Activated CD4-positive, alpha-beta T cell treated with anti-CD3 and anti-CD28 coated beads, Interleukin-2, amount 10 ng/mL, durations not matched to agents 24 days and 14 days (primary cell): ENCODE measurements at regions of chr6 and their contacts with region 1.

Region 1: GRCh38 chr6:26537846-26538571 is at the start of gene HMGN4:
- DNase-seq: peak; percentile 95
- H3K4me3 Mint-ChIP-seq: peak within 1 kb of the TSS; percentile 93
- H3K27ac Mint-ChIP-seq: peak within 1 kb of the TSS; percentile 95
- H3K4me1 Mint-ChIP-seq: peaks cover 51% of the 10 kb centered on the region
- H3K27me3 Mint-ChIP-seq: peaks cover 2% of the 10 kb centered on the region
- total RNA-seq, gene HMGN4: 81.6 and 83.4 TPM in 2 replicates

Region 2: DNA sequence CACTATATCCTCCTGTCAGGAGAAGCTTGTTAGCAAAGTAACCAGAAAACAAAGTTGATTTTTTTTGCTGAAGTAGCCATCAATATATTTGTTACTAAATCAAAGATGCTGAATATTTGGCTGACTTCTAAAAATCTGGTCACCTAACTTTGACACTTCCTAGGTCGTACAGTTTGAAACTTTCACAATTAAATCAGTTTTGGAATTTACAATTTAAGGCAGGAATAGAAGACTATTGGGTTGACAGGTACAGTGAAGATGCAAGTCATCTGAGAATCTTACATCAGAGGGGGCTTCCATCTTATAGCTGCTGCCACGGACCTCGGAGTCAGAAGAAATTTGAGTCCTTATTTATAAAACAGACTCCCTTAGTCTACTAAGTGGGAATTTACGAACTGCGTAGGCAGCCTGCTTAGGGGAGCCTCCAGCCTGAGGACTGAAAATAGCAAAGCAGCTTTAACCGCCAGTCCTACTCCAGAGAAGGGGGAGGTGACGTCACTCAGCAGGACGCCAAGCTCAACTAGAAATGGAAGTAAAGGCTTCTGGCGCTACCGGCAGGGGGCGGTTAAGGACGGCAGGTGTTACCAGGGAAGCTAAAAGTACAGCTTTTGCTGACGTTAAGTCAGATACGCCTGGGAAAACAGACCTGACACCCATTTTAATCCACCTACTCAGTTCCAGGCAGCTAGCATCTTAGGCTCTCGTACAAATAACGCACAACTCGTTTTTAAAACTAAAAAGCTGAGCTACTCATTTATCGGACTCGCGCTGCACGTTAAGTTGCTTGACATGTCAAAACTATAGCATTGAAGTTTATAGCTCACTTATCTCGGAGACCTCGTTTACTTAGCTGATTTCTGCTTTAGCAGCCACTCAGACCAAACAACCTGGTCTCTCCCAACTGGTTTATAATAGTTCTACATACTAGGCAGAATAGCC is 511.8 kb before region 1 on chr6:
- intact Hi-C with region 1: loop called (anchors 1 kb)
- DNase-seq: peak; percentile 97
- H3K4me3 Mint-ChIP-seq: peak overlapping the region; percentile 93
- H3K27ac Mint-ChIP-seq: peak overlapping the region; percentile 98
- H3K4me1 Mint-ChIP-seq: peaks cover 64% of the 10 kb centered on the region
- H3K27me3 Mint-ChIP-seq: peaks cover 3% of the 10 kb centered on the region

Region 3: GRCh38 chr6:26312501-26313390 is 225.3 kb before region 1 on chr6:
- intact Hi-C with region 1: loop called (anchors 2 kb)
- DNase-seq: peak; percentile 94
- H3K4me3 Mint-ChIP-seq: peak overlapping the region; percentile 91
- H3K27ac Mint-ChIP-seq: peak overlapping the region; percentile 81
- H3K4me1 Mint-ChIP-seq: peaks cover 41% of the 10 kb centered on the region
- H3K27me3 Mint-ChIP-seq: peaks cover 2% of the 10 kb centered on the region

Region 4: GRCh38 chr6:26473758-26474438 is 64.1 kb before region 1 on chr6:
- intact Hi-C with region 1: loop called (anchors 1 kb)
- DNase-seq: peak; percentile 95
- H3K4me3 Mint-ChIP-seq: peak overlapping the region; percentile 96
- H3K27ac Mint-ChIP-seq: peak overlapping the region; percentile 100
- H3K4me1 Mint-ChIP-seq: peaks cover 30% of the 10 kb centered on the region
- H3K27me3 Mint-ChIP-seq: no peaks in the 10 kb centered on the region

Region 5: GRCh38 chr6:26501482-26501986 is 36.5 kb before region 1 on chr6:
- intact Hi-C with region 1: no loop called
- DNase-seq: peak; percentile 80
- H3K4me3 Mint-ChIP-seq: peak overlapping the region; percentile 81
- H3K27ac Mint-ChIP-seq: no peak overlapping the region
- H3K4me1 Mint-ChIP-seq: peaks cover 20% of the 10 kb centered on the region
- H3K27me3 Mint-ChIP-seq: peaks cover 49% of the 10 kb centered on the region

Region 6: DNA sequence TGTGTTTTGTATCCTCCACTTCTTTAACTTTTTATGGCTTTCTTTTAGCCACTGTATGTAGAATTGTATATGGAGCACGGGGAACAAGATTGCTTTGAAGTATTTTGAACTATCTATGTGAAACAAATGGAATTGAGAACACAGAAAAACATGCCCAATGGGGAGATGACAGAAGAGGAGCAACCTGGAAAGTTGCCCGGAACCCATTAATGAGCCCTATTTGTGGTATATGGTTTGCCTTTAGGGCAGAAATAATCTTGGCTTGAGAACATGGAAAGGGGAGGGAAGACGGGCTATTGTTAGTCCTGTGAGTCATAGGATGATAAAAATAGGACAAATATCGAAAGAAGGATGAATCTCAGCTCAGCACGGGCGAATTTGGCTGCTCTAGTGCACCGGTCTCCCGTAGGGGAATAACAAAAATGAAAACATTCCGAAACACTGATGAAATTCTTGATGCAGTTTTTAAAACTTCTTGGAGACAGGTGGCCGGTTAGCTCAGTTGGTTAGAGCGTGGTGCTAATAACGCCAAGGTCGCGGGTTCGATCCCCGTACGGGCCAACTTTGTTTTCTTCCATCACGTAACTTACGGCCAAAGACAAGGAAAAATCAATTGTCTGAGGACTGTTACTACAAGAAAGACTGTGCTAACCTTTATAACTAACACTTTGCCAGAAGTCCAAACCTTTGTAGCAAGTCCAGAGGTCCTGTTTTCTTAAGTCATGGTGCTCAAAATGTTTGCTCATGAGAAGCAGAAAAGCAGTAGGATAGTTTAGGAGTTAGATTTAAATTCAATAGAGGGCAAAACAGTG is 15.8 kb after region 1 on chr6:
- intact Hi-C with region 1: loop called (anchors 1 kb)
- DNase-seq: peak; percentile 94
- H3K4me3 Mint-ChIP-seq: no peak overlapping the region
- H3K27ac Mint-ChIP-seq: no peak overlapping the region
- H3K4me1 Mint-ChIP-seq: peaks cover 22% of the 10 kb centered on the region
- H3K27me3 Mint-ChIP-seq: peaks cover 2% of the 10 kb centered on the region

Region 7: GRCh38 chr6:26596579-26597388 is 58.8 kb after region 1 on chr6 and contains the start of gene ABT1:
- intact Hi-C with region 1: loop called (anchors 1 kb)
- DNase-seq: peak; percentile 99
- H3K4me3 Mint-ChIP-seq: no peak within 1 kb of the TSS
- H3K27ac Mint-ChIP-seq: no peak within 1 kb of the TSS
- H3K4me1 Mint-ChIP-seq: peaks cover 32% of the 10 kb centered on the region
- H3K27me3 Mint-ChIP-seq: peaks cover 28% of the 10 kb centered on the region
- total RNA-seq, gene ABT1: 31.9 and 32.1 TPM in 2 replicates